ENCODE measurements at regions of chr15 and their contacts with region 1.

Region 1: GRCh38 chr15:27889258-27889657 is 209.9 kb downstream of the OCA2 start:
- DNase-seq: no peak
- H3K4me3 ChIP-seq: no peak overlapping the region
- H3K27ac ChIP-seq: no peak overlapping the region
- H3K4me1 ChIP-seq: no peaks in the 10 kb centered on the region
- H3K27me3 ChIP-seq: no peaks in the 10 kb centered on the region
- CTCF ChIP-seq: no peak
- EP300 ChIP-seq: no peak
- POLR2A ChIP-seq: no peak

Region 2: GRCh38 chr15:27853624-27854455 is 35.4 kb before region 1 on chr15:
- in situ Hi-C with region 1: no loop called
- intact Hi-C with region 1: loop called (anchors 2 kb)
- DNase-seq: no peak
- H3K4me3 ChIP-seq: no peak overlapping the region
- H3K27ac ChIP-seq: no peak overlapping the region
- H3K4me1 ChIP-seq: no peaks in the 10 kb centered on the region
- H3K27me3 ChIP-seq: no peaks in the 10 kb centered on the region
- CTCF ChIP-seq: no peak
- EP300 ChIP-seq: no peak
- POLR2A ChIP-seq: no peak

Region 3: GRCh38 chr15:27990521-27991515 is 101.6 kb after region 1 on chr15:
- in situ Hi-C with region 1: no loop called
- intact Hi-C with region 1: no loop called
- DNase-seq: no peak
- H3K4me3 ChIP-seq: no peak overlapping the region
- H3K27ac ChIP-seq: no peak overlapping the region
- H3K4me1 ChIP-seq: no peaks in the 10 kb centered on the region
- H3K27me3 ChIP-seq: no peaks in the 10 kb centered on the region
- CTCF ChIP-seq: no peak
- EP300 ChIP-seq: no peak
- POLR2A ChIP-seq: no peak

Measured in transverse colon (tissue), 4 donors.